Caco-2 (cell line): ENCODE measurements at regions of chr2 and their contacts with region 1.

Region 1: DNA sequence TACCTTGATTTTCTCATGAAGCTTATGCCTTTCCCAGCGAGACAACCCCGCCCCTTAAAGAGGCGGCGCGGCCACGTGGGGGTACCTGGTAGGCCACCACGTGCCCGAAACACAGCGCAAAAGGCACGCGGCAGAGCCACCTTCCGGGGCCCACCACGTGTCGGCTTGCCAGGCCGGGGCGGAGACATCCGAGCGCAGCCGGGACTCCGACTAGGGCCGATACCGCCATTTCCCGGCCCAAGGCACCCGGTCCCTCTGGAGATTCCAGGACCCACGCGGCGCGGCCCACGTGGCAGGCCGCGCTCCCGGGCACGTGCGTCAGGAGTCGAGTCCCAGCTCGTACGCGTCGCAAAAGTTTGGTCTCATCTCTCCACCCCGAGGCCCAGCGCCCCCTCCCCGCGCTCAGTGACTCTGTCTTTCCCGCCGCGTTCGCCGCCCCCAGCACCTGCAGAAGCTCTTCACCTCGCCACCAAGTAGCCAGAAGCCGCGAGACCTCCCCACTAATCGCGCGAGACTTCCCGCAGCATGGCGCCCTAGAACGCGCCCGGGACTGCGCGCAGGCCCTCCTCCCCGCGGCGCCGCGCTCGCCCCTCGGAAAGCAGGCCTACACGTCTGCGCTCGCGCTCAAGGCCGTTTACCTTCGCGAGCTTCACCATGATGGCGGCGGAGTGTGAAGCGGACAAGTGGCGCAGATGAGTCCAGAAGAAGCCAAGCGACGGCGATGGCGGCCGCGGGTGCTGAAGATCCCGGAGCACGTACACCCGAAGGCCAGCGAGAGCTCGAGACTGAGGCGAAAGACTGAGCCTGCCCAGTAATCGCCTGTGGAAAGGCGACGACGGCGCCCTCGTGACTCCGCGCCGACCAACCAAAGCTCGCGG is at the start of gene NCL:
- DNase-seq: peak; percentile 78 to 81
- H3K4me3 ChIP-seq: peak within 1 kb of the TSS; percentile 96
- H3K4me3 Mint-ChIP-seq: peak within 1 kb of the TSS; percentile 89
- H3K27ac Mint-ChIP-seq: peak within 1 kb of the TSS; percentile 98
- H3K4me1 ChIP-seq: no peaks in the 10 kb centered on the region; the same call in 1 of the 2 replicates
- H3K4me1 Mint-ChIP-seq: peaks cover 13% of the 10 kb centered on the region
- H3K27me3 ChIP-seq: no peaks in the 10 kb centered on the region
- H3K27me3 Mint-ChIP-seq: peaks cover 2% of the 10 kb centered on the region
- CTCF ChIP-seq: no peak
- total RNA-seq, gene NCL: 608 and 612 TPM in 2 replicates

Region 2: DNA sequence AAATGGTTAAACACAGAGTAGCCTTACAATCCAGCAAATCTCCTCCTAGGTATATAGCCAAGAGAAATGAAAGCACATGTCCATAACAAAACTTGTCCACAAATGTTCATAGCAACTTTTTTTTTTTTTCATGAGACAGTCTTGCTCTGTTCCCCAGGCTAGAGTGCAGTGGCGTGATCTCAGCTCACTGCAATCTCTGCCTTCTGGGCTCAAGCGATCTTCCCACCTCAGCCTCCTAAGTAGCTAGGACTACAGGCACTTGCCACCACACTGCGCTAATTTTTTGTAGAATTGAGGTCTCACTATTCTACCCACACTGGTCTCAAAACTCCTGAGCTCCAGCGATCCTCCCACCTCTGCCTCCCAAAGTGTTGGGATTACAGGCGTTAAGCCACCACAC is 13.8 kb after region 1 on chr2:
- CTCF ChIA-PET with region 1: interaction called, 12 read pairs
- POLR2A ChIA-PET with region 1: interaction called, 11 read pairs
- intact Hi-C with region 1: no loop called
- DNase-seq: no peak
- H3K4me3 ChIP-seq: no peak overlapping the region
- H3K4me3 Mint-ChIP-seq: no peak overlapping the region
- H3K27ac Mint-ChIP-seq: no peak overlapping the region
- H3K4me1 ChIP-seq: no peaks in the 10 kb centered on the region
- H3K4me1 Mint-ChIP-seq: no peaks in the 10 kb centered on the region
- H3K27me3 ChIP-seq: no peaks in the 10 kb centered on the region
- H3K27me3 Mint-ChIP-seq: peaks cover 2% of the 10 kb centered on the region
- CTCF ChIP-seq: no peak

Region 3: DNA sequence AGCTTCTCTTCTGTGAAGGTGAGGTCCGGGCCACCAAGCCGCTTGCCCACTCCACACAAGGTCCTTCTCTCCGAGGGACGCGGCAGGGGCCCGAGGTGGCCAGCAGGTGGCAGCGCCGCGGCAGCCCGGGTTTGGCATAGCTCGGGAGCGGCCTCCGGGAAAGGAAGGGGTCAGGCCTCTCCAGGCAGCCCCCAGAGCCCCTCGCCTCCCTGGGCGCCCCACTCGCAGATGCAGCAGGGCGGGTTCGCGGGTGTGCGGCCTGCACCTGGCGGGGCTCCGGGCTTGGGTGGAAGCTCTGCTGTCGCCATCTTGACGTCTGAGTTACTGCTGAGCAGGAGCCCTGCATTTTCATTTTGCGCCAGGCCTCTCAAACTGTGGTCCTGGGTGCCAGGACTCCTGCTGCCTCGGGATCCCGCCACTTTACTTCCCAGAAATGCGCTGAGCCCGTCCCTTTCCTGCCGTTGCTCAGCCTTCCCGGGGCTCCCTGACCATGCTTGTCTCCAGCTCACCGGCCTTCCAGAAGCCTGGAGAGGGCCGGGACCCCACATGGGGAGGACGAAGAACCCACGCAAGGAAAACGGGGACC is 19.0 kb after region 1 on chr2:
- CTCF ChIA-PET with region 1: interaction called, 12 read pairs
- POLR2A ChIA-PET with region 1: interaction called, 11 read pairs
- intact Hi-C with region 1: no loop called
- DNase-seq: peak; percentile 43 to 61
- H3K4me3 ChIP-seq: no peak overlapping the region
- H3K4me3 Mint-ChIP-seq: no peak overlapping the region
- H3K27ac Mint-ChIP-seq: no peak overlapping the region
- H3K4me1 ChIP-seq: no peaks in the 10 kb centered on the region
- H3K4me1 Mint-ChIP-seq: no peaks in the 10 kb centered on the region
- H3K27me3 ChIP-seq: no peaks in the 10 kb centered on the region
- H3K27me3 Mint-ChIP-seq: no peaks in the 10 kb centered on the region
- CTCF ChIP-seq: peak; percentile 53 to 73

Region 4: DNA sequence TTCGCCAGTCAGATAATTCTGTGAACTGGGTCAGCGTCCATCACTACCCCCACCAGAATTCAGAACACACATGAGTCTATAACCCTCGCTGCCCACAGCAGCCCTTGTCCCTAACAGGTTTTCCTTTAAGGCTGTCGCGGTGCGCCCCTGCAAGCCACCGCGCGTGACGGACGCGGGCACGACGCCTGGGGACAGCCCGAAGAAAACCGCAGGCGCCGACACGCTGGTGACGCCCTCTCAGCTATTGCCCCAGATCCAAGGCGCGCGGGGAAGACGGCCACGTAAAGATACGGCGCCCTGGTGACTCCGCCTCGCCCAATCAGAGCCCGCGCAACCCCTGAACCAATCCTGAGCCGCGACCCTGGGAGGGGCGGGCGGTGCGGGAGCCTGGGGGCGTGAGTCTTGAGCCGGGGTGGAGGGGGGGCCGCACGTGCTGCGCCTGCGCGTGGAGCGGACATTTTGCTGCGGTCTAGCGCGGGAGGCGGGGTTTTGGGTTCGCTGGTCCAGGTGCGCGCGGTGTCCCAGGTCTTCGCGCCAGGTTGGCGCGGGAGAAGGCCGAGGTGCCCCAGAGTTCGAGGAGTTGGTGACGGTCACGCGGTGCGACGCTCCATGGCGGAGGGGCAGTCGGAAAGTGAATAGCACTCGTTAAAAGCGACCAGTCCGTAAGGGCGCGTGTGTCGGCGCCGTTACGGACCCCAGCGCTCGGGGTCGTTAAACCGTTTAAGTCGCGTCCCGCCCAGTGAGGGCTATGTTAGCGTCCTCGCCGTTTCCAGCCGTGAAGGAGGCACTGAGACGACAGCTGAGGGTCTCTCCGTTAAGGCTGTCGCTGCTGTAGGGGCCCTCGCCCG is 50.4 kb after region 1 on chr2:
- CTCF ChIA-PET with region 1: no interaction called
- POLR2A ChIA-PET with region 1: interaction called, 17 read pairs
- intact Hi-C with region 1: loop called (anchors 1 kb)
- DNase-seq: peak; percentile 96 to 97
- H3K4me3 ChIP-seq: peak overlapping the region; percentile 68
- H3K4me3 Mint-ChIP-seq: peak overlapping the region; percentile 89
- H3K27ac Mint-ChIP-seq: peak overlapping the region; percentile 95
- H3K4me1 ChIP-seq: no peaks in the 10 kb centered on the region
- H3K4me1 Mint-ChIP-seq: no peaks in the 10 kb centered on the region
- H3K27me3 ChIP-seq: no peaks in the 10 kb centered on the region
- H3K27me3 Mint-ChIP-seq: no peaks in the 10 kb centered on the region
- CTCF ChIP-seq: no peak

Region 5: GRCh38 chr2:231621129-231621879 is 157.4 kb after region 1 on chr2:
- CTCF ChIA-PET with region 1: no interaction called
- POLR2A ChIA-PET with region 1: interaction called, 12 read pairs
- intact Hi-C with region 1: no loop called
- DNase-seq: peak; percentile 79 to 92
- H3K4me3 ChIP-seq: no peak overlapping the region
- H3K4me3 Mint-ChIP-seq: peak overlapping the region; percentile 58
- H3K27ac Mint-ChIP-seq: peak overlapping the region; percentile 88
- H3K4me1 ChIP-seq: peaks cover 37% of the 10 kb centered on the region
- H3K4me1 Mint-ChIP-seq: peaks cover 30% of the 10 kb centered on the region
- H3K27me3 ChIP-seq: no peaks in the 10 kb centered on the region
- H3K27me3 Mint-ChIP-seq: no peaks in the 10 kb centered on the region
- CTCF ChIP-seq: no peak